Calu3 (cell line): ENCODE measurements at regions of chr3 and their contacts with region 1.

Region 1: GRCh38 chr3:82122554-82123345 is 361.3 kb upstream of the GBE1 start:
- DNase-seq: no peak
- H3K4me3 Mint-ChIP-seq: no peak overlapping the region
- H3K27ac Mint-ChIP-seq: no peak overlapping the region
- H3K4me1 Mint-ChIP-seq: no peaks in the 10 kb centered on the region
- H3K27me3 Mint-ChIP-seq: no peaks in the 10 kb centered on the region
- CTCF ChIP-seq: no peak

Region 2: DNA sequence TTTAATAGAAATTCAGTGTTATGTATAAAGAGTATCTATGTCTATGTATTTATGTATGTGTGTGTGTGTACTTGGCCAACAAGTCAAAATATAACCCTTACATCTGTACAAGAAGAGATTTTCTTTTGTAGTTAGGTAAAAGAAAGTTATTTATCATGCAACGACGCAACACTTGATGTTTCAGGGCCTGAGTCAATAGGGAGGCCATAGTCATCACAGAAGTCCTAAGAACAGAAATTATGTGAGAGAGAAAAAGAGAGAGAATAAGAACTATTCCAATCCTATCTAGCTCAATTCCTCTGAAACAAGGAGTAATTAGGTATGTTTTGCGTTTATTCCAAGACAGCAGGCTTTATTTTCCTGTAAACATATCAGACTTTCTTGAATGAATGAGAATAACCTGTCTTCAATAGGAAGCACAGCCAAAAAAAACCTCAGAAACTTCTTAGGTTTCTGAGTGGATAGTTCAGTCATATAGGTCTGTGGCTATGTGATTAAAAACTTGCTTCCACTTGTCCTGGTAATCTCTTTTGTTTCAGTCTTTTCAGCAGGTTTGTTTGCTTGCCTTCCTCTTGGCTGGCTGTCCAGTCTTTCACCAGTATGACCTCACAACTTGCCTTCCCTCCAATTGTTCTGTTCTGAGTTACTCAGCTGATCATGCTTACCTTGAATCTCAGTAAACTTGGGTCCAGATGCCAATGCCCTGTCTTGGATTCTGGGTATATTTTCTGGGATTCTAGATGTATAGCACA is 21.1 kb after region 1 on chr3:
- CTCF ChIA-PET with region 1: interaction called, 13 read pairs
- intact Hi-C with region 1: no loop called
- DNase-seq: no peak
- H3K4me3 Mint-ChIP-seq: no peak overlapping the region
- H3K27ac Mint-ChIP-seq: no peak overlapping the region
- H3K4me1 Mint-ChIP-seq: no peaks in the 10 kb centered on the region
- H3K27me3 Mint-ChIP-seq: no peaks in the 10 kb centered on the region
- CTCF ChIP-seq: no peak

Region 3: GRCh38 chr3:82410374-82410773 is 287.6 kb after region 1 on chr3:
- CTCF ChIA-PET with region 1: no interaction called
- intact Hi-C with region 1: no loop called
- DNase-seq: peak; percentile 9
- H3K4me3 Mint-ChIP-seq: no peak overlapping the region
- H3K27ac Mint-ChIP-seq: no peak overlapping the region
- H3K4me1 Mint-ChIP-seq: no peaks in the 10 kb centered on the region
- H3K27me3 Mint-ChIP-seq: no peaks in the 10 kb centered on the region
- CTCF ChIP-seq: no peak

Region 4: DNA sequence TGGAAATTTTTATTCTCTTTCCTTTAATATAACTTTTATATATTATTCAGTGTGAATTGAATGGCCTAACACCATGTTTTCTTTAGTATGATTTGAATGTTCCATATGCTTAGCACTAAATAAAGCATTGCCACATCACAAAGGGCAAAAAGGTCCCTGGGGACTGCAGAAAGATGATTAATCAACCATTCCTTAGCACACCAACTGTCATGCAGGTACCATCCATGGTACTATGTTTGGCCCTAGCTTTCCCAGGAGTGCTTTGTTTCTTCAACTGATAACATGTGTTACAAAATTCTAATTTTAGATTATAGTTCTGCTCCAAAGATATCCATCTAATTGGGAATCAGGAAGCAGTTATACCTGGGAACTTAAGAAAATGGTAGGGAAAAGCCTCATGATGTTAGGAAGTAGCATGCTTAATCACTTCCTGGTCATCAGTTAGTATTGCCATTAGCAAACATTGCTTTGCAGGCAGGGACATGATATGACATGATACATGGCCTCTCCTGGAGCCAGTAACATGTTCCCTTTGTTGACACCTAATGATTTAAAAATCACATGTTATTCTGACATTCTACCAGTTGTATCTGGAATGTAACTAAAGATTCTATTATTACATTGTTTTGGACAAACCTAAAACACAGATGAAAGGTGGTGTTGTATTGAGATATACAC is 351.3 kb after region 1 on chr3:
- CTCF ChIA-PET with region 1: no interaction called
- intact Hi-C with region 1: no loop called
- DNase-seq: no peak
- H3K4me3 Mint-ChIP-seq: no peak overlapping the region
- H3K27ac Mint-ChIP-seq: no peak overlapping the region
- H3K4me1 Mint-ChIP-seq: no peaks in the 10 kb centered on the region
- H3K27me3 Mint-ChIP-seq: no peaks in the 10 kb centered on the region
- CTCF ChIP-seq: no peak